ENCODE measurements at regions of chr2 and their contacts with region 1.

Region 1: DNA sequence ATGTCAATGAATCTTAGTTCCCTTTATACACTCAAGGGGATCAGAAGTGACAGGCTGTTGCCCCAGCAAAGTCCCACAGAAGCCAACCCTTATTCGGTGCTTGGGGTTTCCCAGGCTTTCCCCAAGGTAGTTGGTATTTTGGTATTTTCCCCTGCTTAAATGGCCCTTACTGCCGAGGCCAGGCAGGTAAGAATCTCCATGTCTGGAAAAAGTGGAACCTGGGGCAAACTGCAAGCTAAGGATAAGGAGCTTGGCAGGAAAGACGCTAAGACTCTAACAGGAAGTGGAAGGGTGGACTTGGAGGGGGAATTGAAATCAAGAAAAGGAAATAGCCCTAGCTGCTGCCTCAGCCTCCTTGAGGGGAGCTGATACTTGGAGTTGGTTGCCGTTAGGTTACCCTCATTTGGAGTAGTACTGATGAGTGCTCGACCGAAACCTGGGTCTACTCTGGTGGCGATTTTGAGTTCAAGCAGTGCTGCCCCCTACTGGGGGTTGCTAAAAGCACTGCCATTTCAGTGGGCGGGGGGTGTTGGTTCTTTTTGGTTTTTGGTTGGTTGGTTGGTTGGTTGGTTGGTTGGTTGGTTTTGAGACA is 3.3 kb upstream of the GPBAR1 start:
- DNase-seq: peak in 1 of 2 donors; percentile 65
- H3K4me3 ChIP-seq: no peak overlapping the region
- H3K27ac ChIP-seq: peak overlapping the region in 1 of 2 donors; percentile 1
- H3K4me1 ChIP-seq: peaks cover 0 to 36% (median 22%) of the 10 kb centered on the region in 4 donors
- H3K27me3 ChIP-seq: no peaks in the 10 kb centered on the region
- CTCF ChIP-seq: peak; percentile 26 to 36

Region 2: GRCh38 chr2:217622205-217623060 is 635.1 kb before region 1 on chr2:
- intact Hi-C with region 1: loop called (anchors 10 kb)
- DNase-seq: no peak
- H3K4me3 ChIP-seq: no peak overlapping the region
- H3K27ac ChIP-seq: no peak overlapping the region
- H3K4me1 ChIP-seq: peaks cover 0 to 23% (median 9%) of the 10 kb centered on the region in 4 donors
- H3K27me3 ChIP-seq: no peaks in the 10 kb centered on the region
- CTCF ChIP-seq: no peak

Measured in tibial artery (tissue), 4 donors.